ENCODE measurements at regions of chr1 and their contacts with region 1.

Region 1: DNA sequence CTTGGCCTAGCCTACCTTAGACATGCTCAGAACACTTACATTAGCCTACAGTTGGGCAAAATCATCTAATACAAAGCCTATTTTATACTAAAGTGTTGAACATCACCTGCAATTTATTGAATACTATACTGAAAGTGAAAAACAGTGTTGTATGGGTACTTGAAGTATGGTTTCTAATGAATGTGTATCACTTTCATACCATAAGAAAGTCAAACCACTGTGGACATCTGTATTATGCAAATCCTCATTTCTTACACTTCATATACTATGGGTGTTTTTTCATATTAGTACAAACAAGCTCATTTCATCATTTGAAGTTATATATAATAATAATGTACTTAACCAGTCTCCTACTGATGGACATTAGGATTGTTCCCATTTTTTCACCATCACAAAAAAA is 41.2 kb downstream of the TDRD5 start:
- DNase-seq: no peak
- H3K4me3 ChIP-seq: no peak overlapping the region
- H3K27ac ChIP-seq: no peak overlapping the region
- H3K4me1 ChIP-seq: no peaks in the 10 kb centered on the region
- H3K27me3 ChIP-seq: peaks cover 0 to 2% of the 10 kb centered on the region in 2 experiments
- CTCF ChIP-seq: no peak
- POLR2A ChIP-seq: no peak

Region 2: DNA sequence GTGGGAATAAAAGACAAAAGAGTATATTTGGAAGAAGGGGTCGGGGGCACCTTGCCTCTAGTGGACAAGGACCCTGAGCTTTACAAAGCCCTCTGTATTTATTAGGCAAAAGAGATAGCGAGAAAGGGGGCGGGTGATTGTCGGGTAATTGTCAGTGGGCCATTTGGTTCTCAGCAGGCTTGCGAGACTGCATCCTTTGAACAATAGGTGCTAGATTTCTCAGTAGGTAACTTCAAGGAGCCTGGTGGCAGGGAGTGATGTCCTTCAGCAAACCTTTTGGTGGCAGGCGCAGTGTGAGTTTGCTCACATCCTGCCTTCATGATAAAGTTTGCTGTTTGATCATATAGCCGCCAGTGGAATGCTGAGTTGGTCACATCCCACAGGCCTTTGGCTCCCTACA is 195.7 kb before region 1 on chr1:
- CTCF ChIA-PET with region 1: no interaction called
- POLR2A ChIA-PET with region 1: no interaction called
- dilution Hi-C with region 1: no loop called
- intact Hi-C with region 1: loop called (anchors 10 kb)
- DNase-seq: no peak
- H3K4me3 ChIP-seq: no peak overlapping the region
- H3K27ac ChIP-seq: no peak overlapping the region
- H3K4me1 ChIP-seq: no peaks in the 10 kb centered on the region
- H3K27me3 ChIP-seq: no peaks in the 10 kb centered on the region
- CTCF ChIP-seq: no peak
- POLR2A ChIP-seq: no peak

Region 3: GRCh38 chr1:179856296-179856695 is 223.4 kb after region 1 on chr1:
- CTCF ChIA-PET with region 1: no interaction called
- POLR2A ChIA-PET with region 1: no interaction called
- dilution Hi-C with region 1: no loop called
- intact Hi-C with region 1: no loop called
- DNase-seq: no peak
- H3K4me3 ChIP-seq: no peak overlapping the region
- H3K27ac ChIP-seq: no peak overlapping the region
- H3K4me1 ChIP-seq: no peaks in the 10 kb centered on the region
- H3K27me3 ChIP-seq: no peaks in the 10 kb centered on the region
- CTCF ChIP-seq: no peak
- POLR2A ChIP-seq: no peak